Mucosa of descending colon (tissue), 3 donors: ENCODE measurements at regions of chr15 and their contacts with region 1.

Region 1: GRCh38 chr15:40893733-40894688 is at the start of gene VPS18:
- DNase-seq: peak; percentile 99 to 100 (median 100)
- ATAC-seq: peak; percentile 95
- H3K4me3 ChIP-seq: peak within 1 kb of the TSS; percentile 54
- H3K4me1 ChIP-seq: peaks cover 11% of the 10 kb centered on the region
- CTCF ChIP-seq: peak; percentile 100
- total RNA-seq, gene VPS18: 14.1 to 21.1 (median 18.0) TPM

Region 2: DNA sequence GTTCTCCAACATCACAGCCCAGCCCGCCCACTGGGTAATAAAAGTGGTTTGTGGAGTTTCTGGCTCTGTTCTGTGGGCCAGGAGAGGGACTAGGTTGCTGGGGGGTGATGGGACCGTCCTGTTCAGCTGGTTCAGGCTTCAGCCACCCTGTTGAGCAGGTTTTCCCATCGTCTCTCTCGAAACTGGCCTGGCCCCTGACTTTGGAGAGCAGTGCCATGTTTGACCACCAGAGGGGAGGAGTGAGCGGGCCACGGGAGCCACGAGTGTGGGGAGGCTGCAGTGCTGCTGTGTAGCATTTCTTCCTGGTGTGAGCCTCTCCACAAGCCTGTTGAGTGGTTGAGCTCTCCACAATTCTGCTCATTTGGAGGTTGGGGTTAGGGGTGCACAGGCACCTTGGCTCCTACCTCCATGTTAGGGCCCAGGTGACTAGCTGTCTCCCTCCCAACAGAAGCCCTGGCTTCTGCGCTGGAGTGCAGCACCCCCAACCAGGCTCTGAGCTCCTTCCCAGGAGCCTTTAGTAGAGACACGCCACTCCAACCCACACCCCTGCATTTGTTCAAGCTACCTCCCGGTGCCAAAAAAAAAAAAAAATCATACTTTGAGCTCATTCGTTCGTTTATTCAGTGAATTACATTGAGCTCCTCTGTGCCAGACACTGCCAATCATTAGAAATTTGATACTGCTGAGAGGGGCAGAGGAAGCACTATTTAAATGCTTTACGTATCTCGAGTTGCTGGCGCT is 36.2 kb before region 1 on chr15:
- intact Hi-C with region 1: loop called (anchors 2 to 5 kb)
- DNase-seq: peak; percentile 81 to 94 (median 90)
- ATAC-seq: peak; percentile 83
- H3K4me3 ChIP-seq: no peak overlapping the region
- H3K4me1 ChIP-seq: peaks cover 33% of the 10 kb centered on the region
- CTCF ChIP-seq: peak; percentile 93

Region 3: DNA sequence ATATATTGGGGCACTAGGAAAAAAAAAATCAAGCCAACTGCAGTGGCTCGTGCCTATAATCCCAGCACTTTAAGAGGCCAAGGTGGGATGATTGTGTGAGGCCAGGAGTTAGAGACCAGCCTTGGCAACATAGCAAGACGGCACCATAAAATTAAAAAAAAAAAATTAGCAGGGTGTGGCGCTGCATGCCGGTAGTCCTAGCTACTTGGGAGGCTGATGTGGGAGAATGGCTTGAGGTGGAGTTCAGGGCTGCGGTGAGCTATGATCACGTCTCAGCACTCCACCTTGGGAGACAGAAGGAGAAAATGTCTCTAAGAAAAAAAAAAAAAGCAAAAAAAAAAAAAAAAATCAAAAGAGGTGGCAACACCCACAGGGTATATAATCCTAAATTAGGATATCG is 172.5 kb after region 1 on chr15:
- intact Hi-C with region 1: no loop called
- DNase-seq: peak in 1 of 3 donors; percentile 8
- ATAC-seq: peak; percentile 54
- H3K4me3 ChIP-seq: no peak overlapping the region
- H3K4me1 ChIP-seq: no peaks in the 10 kb centered on the region
- CTCF ChIP-seq: no peak